ENCODE measurements at regions of chr18 and their contacts with region 1.

Region 1: GRCh38 chr18:74396171-74397169 is 60.6 kb downstream of the DIPK1C start:
- DNase-seq: no peak
- H3K4me3 ChIP-seq: no peak overlapping the region
- H3K27ac ChIP-seq: no peak overlapping the region
- H3K4me1 ChIP-seq: peaks cover 2% of the 10 kb centered on the region
- H3K27me3 ChIP-seq: no peaks in the 10 kb centered on the region
- CTCF ChIP-seq: no peak
- EP300 ChIP-seq: no peak
- POLR2A ChIP-seq: no peak

Region 2: DNA sequence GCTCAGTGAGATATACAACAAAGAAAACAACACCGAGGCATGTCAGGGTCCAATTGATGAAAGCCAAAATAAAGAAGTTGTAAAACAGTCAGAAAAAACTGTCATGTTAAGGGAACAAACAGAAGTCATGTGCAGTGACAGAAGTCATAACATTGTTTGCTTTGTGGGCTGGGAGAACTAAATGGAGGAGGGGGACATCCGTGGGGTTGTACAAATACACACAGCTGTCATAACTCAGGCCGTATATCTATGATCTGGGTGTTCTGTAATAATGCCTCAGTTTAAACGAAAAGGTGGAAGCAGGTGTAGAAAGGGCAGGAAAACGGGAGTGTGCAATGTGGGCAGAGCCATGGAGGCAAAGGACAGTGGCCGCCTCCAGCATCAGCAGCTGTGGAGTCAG is 220.8 kb before region 1 on chr18:
- intact Hi-C with region 1: loop called in 1 of 4 experiments (anchors 2 kb)
- DNase-seq: no peak
- H3K4me3 ChIP-seq: no peak overlapping the region
- H3K27ac ChIP-seq: no peak overlapping the region
- H3K4me1 ChIP-seq: no peaks in the 10 kb centered on the region
- H3K27me3 ChIP-seq: no peaks in the 10 kb centered on the region
- CTCF ChIP-seq: no peak
- EP300 ChIP-seq: no peak
- POLR2A ChIP-seq: no peak

Region 3: DNA sequence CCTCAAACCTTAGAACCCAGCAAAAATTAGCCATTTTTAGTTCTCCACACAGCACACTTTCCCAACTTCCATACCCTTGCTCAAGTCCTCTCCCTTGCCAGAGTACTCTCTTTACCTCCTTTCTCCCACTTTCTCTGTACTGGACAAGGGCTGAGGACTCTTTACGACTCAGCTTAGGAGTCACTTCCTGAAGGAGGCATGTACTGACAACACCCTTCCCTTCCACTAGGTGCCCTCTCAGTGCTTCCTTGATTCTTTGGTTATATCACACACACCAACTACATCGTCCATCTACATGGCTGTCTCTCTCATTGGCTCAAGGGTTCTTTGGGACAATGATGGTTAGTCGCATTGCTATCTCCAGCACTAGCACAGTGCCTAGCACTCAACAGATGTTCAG is 86.1 kb before region 1 on chr18:
- intact Hi-C with region 1: no loop called
- DNase-seq: no peak
- H3K4me3 ChIP-seq: no peak overlapping the region
- H3K27ac ChIP-seq: no peak overlapping the region
- H3K4me1 ChIP-seq: no peaks in the 10 kb centered on the region
- H3K27me3 ChIP-seq: no peaks in the 10 kb centered on the region
- CTCF ChIP-seq: no peak
- EP300 ChIP-seq: no peak
- POLR2A ChIP-seq: no peak